Activated naive CD4-positive, alpha-beta T cell treated with anti-CD3 and anti-CD28 coated beads for 36 hours (primary cell): ENCODE measurements at regions of chr20 and their contacts with region 1.

Region 1: DNA sequence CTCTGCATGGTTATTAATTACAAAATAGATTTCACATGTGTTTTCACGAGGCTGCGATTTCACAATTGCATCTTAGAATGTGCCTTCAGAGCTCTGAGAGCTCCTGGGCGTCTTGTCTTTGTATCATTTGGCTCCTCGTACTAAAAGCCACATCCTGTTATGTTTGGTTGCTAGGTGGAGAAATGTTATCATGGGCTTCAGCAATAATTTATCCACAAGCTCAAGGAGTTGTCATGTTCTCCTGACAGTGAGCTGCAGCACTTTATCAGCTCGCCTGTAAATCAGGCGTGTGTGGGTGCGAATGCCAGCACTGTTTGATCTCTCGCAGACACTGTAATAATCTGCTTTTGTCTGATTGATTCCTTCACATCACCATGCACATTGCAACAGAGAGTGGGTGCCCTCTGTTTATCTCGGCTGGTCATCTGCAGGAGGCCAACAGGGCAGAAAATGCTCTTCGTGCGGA is 218.6 kb upstream of the ZFP64 start:
- DNase-seq: peak; percentile 54
- H3K4me3 Mint-ChIP-seq: peak overlapping the region; percentile 20
- H3K27ac Mint-ChIP-seq: peak overlapping the region; percentile 17
- H3K4me1 Mint-ChIP-seq: peaks cover 66% of the 10 kb centered on the region
- H3K27me3 Mint-ChIP-seq: no peaks in the 10 kb centered on the region

Region 2: GRCh38 chr20:52361650-52362049 is 48.6 kb before region 1 on chr20:
- CTCF ChIA-PET with region 1: no interaction called
- intact Hi-C with region 1: loop called (anchors 2 kb)
- DNase-seq: no peak
- H3K4me3 Mint-ChIP-seq: no peak overlapping the region
- H3K27ac Mint-ChIP-seq: no peak overlapping the region
- H3K4me1 Mint-ChIP-seq: peaks cover 16% of the 10 kb centered on the region
- H3K27me3 Mint-ChIP-seq: no peaks in the 10 kb centered on the region

Region 3: GRCh38 chr20:53316221-53316937 is 906.2 kb after region 1 on chr20:
- CTCF ChIA-PET with region 1: no interaction called
- intact Hi-C with region 1: loop called (anchors 5 kb)
- DNase-seq: no peak
- H3K4me3 Mint-ChIP-seq: no peak overlapping the region
- H3K27ac Mint-ChIP-seq: no peak overlapping the region
- H3K4me1 Mint-ChIP-seq: peaks cover 20% of the 10 kb centered on the region
- H3K27me3 Mint-ChIP-seq: no peaks in the 10 kb centered on the region